OCI-LY7 (cell line): ENCODE measurements at regions of chr16 and their contacts with region 1.

Region 1: DNA sequence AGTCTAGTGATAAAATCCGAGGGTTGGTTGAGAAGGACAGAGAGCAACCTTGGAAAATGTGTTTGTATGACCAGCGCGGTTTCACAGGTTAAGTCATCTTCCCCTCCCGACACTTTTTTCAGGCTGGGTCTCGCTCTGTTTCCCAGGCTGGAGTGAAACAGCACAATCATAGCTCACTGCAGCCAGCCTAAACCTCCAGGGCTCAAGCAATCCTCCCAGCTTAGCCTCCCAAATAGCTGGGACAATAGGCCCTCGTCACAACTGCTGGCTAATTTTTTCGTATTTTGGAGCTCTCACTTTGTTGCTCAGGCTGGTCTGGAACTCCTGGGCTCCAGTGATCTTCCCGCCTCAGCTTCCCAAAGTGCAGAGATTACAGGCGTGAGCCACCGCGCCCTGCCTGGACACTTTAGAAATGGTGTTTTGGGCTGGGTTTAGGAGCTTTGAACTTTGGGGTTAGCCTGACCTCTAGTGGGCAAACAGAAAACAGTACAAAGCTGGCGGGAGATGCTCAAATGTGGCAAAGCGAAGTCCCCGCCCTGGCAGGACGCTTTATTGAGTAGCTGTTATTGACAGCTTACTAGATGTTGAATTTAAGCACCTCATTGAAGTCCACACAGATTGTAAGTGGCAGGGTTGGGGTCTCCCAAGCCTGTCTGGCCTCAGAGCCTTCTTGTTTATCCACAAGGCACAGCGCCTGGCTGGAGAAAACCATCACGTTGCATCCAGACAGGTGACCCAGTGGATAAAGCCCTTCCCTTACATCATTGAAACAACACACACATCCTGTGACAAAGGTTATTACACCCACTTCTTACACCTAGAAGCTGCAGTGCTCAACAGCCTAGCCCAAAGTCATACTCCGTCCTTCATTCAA is 34.7 kb upstream of the RBBP6 start:
- DNase-seq: peak; percentile 70
- H3K4me3 ChIP-seq: no peak overlapping the region
- H3K27ac ChIP-seq: no peak overlapping the region
- H3K4me1 ChIP-seq: no peaks in the 10 kb centered on the region
- CTCF ChIP-seq: peak; percentile 86

Region 2: GRCh38 chr16:24253192-24253591 is 251.5 kb before region 1 on chr16:
- CTCF ChIA-PET with region 1: interaction called, 4 read pairs
- POLR2A ChIA-PET with region 1: no interaction called
- intact Hi-C with region 1: loop called (anchors 10 kb)
- DNase-seq: peak; percentile 78
- H3K4me3 ChIP-seq: no peak overlapping the region
- H3K27ac ChIP-seq: no peak overlapping the region
- H3K4me1 ChIP-seq: peaks cover 35% of the 10 kb centered on the region
- CTCF ChIP-seq: peak; percentile 86